ENCODE measurements at regions of chr5 and their contacts with region 1.

Region 1: DNA sequence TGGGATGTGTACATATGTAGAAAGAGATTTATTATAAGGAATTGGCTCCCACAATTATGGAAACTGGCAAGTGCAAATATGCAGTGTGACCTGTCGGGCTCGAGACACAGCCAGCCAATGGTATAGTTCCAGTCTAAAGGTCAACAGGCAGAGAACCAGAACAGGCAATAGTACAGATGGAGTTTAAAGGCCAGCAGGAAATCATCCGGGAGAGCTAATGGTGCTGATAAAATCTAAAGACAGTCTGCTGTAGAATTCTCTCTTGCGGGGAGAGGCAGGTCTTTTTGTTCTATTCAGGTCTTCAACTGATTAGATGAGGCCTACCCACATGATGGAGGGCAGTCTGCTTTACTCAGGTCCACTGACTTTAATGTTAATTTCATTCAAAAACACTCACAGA is 21.8 kb downstream of the ANKRD31 start:
- DNase-seq: no peak
- ATAC-seq: no peak
- H3K4me3 ChIP-seq: no peak overlapping the region
- H3K4me3 Mint-ChIP-seq: no peak overlapping the region
- H3K27ac ChIP-seq: no peak overlapping the region
- H3K27ac Mint-ChIP-seq: no peak overlapping the region
- H3K4me1 ChIP-seq: no peaks in the 10 kb centered on the region
- H3K4me1 Mint-ChIP-seq: peaks cover 0 to 14% (median 7%) of the 10 kb centered on the region in 7 donors
- H3K27me3 ChIP-seq: no peaks in the 10 kb centered on the region
- H3K27me3 Mint-ChIP-seq: peaks cover 0 to 3% (median 0%) of the 10 kb centered on the region in 5 donors

Region 2: DNA sequence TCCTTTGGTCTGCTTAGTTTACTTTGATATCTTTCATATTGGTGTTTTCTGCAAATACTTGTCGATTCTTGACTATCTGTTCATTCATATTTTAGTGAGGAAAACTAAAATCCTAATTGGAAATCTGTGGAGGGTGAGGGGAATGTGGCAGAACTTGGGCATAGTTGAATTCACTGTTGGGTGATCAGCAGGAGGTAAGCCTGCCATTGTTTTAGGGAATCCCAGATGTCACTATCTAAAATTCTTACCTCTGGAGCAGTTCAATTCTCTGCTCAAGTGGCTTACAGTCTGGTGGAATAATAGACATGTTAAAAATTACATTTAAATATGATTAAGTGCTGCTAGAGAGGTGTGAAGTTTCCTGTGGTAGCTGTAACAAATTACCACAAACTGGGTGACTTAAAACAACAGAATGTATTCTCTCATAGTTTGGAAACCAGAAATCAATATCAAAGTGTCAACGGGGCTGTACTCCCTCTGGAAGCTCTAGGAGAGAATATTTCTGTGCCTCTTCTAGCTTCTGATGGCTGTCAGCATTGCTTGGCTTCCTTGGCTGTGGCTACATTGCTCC is 72.3 kb before region 1 on chr5:
- CTCF ChIA-PET with region 1: no interaction called
- POLR2A ChIA-PET with region 1: no interaction called
- intact Hi-C with region 1: no loop called
- DNase-seq: no peak
- ATAC-seq: no peak
- H3K4me3 ChIP-seq: no peak overlapping the region
- H3K4me3 Mint-ChIP-seq: no peak overlapping the region
- H3K27ac ChIP-seq: no peak overlapping the region
- H3K27ac Mint-ChIP-seq: no peak overlapping the region
- H3K4me1 ChIP-seq: no peaks in the 10 kb centered on the region
- H3K4me1 Mint-ChIP-seq: peaks cover 2 to 29% (median 15%) of the 10 kb centered on the region in 7 donors
- H3K27me3 ChIP-seq: peaks cover 0 to 3% of the 10 kb centered on the region in 2 donors
- H3K27me3 Mint-ChIP-seq: no peaks in the 10 kb centered on the region

Region 3: GRCh38 chr5:75226916-75227315 is 12.0 kb after region 1 on chr5:
- CTCF ChIA-PET with region 1: no interaction called
- POLR2A ChIA-PET with region 1: no interaction called
- intact Hi-C with region 1: loop called in 1 of 2 experiments (anchors 2 kb)
- DNase-seq: no peak
- ATAC-seq: no peak
- H3K4me3 ChIP-seq: no peak overlapping the region
- H3K4me3 Mint-ChIP-seq: no peak overlapping the region
- H3K27ac ChIP-seq: no peak overlapping the region
- H3K27ac Mint-ChIP-seq: no peak overlapping the region
- H3K4me1 ChIP-seq: no peaks in the 10 kb centered on the region
- H3K4me1 Mint-ChIP-seq: peaks cover 0 to 4% (median 0%) of the 10 kb centered on the region in 7 donors
- H3K27me3 ChIP-seq: peaks cover 0 to 2% of the 10 kb centered on the region in 2 donors
- H3K27me3 Mint-ChIP-seq: peaks cover 0 to 3% (median 0%) of the 10 kb centered on the region in 5 donors